SK-N-SH (cell line): ENCODE measurements at regions of chr7 and their contacts with region 1.

Region 1: GRCh38 chr7:149883452-149883861 is 9.7 kb downstream of the ATP6V0E2 start:
- DNase-seq: peak; percentile 82
- H3K4me3 ChIP-seq: no peak overlapping the region; a peak in 1 of 4 replicates
- H3K27ac ChIP-seq: no peak overlapping the region
- H3K4me1 ChIP-seq: no peaks in the 10 kb centered on the region; a peak in 1 of 4 replicates
- H3K27me3 ChIP-seq: no peaks in the 10 kb centered on the region
- CTCF ChIP-seq: peak; percentile 80
- EP300 ChIP-seq: no peak
- RAD21 ChIP-seq: peak; percentile 93

Region 2: GRCh38 chr7:149748076-149748874 is 135.2 kb before region 1 on chr7:
- CTCF ChIA-PET with region 1: no interaction called
- POLR2A ChIA-PET with region 1: no interaction called
- DNase-seq: no peak
- H3K4me3 ChIP-seq: no peak overlapping the region
- H3K27ac ChIP-seq: no peak overlapping the region
- H3K4me1 ChIP-seq: no peaks in the 10 kb centered on the region
- H3K27me3 ChIP-seq: peaks cover 32% of the 10 kb centered on the region
- CTCF ChIP-seq: no peak
- EP300 ChIP-seq: no peak
- RAD21 ChIP-seq: no peak

Region 3: GRCh38 chr7:149873074-149873969 is 10.1 kb before region 1 on chr7 and contains the start of gene ATP6V0E2:
- CTCF ChIA-PET with region 1: interaction called, 17 read pairs
- POLR2A ChIA-PET with region 1: interaction called, 4 read pairs
- DNase-seq: peak; percentile 100
- H3K4me3 ChIP-seq: peak within 1 kb of the TSS; percentile 88 to 91
- H3K27ac ChIP-seq: peak within 1 kb of the TSS; percentile 68 to 88
- H3K4me1 ChIP-seq: peaks cover 0 to 21% of the 10 kb centered on the region in 2 experiments; a peak in 2 of 4 replicates
- H3K27me3 ChIP-seq: no peaks in the 10 kb centered on the region
- CTCF ChIP-seq: no peak
- EP300 ChIP-seq: 0 out of 4 replicates have a peak, but pooled peaks of 1 of the 2 experiments have one; percentile 19
- RAD21 ChIP-seq: no peak
- polyA plus RNA-seq, gene ATP6V0E2: 42.6 and 49.6 TPM in 2 replicates